Activated B cell treated with CpG ODN at 0.5 μM for 24 hours (primary cell): ENCODE measurements at regions of chr17 and their contacts with region 1.

Region 1: GRCh38 chr17:28916302-28916934 is 13.5 kb upstream of the DHRS13 start:
- DNase-seq: no peak
- ATAC-seq: peak; percentile 90
- H3K4me3 Mint-ChIP-seq: no peak overlapping the region
- H3K27ac Mint-ChIP-seq: peak overlapping the region; percentile 35
- H3K4me1 Mint-ChIP-seq: no peaks in the 10 kb centered on the region
- H3K27me3 Mint-ChIP-seq: no peaks in the 10 kb centered on the region
- CTCF ChIP-seq: peak; percentile 52

Region 2: GRCh38 chr17:28849281-28849680 is 67.1 kb before region 1 on chr17:
- CTCF ChIA-PET with region 1: interaction called, 9 read pairs
- POLR2A ChIA-PET with region 1: interaction called, 3 read pairs
- intact Hi-C with region 1: loop called (anchors 2 kb)
- DNase-seq: no peak
- ATAC-seq: no peak
- H3K4me3 Mint-ChIP-seq: no peak overlapping the region
- H3K27ac Mint-ChIP-seq: no peak overlapping the region
- H3K4me1 Mint-ChIP-seq: peaks cover 3% of the 10 kb centered on the region
- H3K27me3 Mint-ChIP-seq: no peaks in the 10 kb centered on the region
- CTCF ChIP-seq: no peak